Right ventricle myocardium inferior (tissue), 1 donor: ENCODE measurements at regions of chr7 and their contacts with region 1.

Region 1: DNA sequence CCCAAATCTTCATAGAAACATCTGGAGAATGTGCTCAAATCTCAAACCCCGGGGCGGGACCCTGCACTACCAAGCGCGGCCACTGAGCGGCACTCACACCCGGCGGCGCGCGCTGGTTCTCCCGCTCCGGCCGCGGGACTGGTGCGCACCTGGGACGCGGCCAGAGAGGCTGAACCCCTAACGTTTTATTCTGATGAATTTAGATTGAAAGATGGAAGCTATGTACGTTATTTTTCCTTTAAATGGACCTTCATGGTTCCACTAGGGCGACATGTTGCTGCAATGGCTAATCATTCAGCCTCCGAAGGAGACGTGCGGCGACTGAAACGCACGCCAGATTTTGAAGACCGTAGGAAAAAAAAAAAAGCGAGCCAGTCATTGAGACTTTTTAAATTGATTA is 107.0 kb upstream of the INSIG1 start:
- DNase-seq: peak; percentile 79
- ATAC-seq: peak; percentile 54

Region 2: GRCh38 chr7:154927624-154928143 is 263.0 kb before region 1 on chr7:
- intact Hi-C with region 1: loop called (anchors 5 kb)
- DNase-seq: no peak
- ATAC-seq: peak; percentile 86

Region 3: DNA sequence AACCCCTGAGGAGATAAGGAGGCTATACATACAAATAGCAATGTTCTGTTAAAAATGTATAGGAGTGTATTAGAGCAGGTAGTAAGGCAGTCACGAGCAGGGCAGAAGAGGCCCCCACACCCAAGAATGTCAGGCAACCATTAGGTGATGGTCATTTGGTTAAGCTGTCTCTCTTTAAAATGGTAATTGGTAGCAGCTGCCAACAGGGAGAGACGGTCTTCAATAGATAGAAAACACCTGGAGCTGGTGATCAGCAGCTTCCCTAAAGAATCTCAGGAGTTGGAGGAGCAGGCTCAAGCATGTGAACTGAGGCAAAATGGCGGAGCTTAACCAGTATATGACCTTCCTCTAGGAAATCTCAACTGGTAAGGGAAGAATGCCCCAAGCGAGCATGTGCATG is 146.9 kb before region 1 on chr7:
- intact Hi-C with region 1: no loop called
- DNase-seq: no peak
- ATAC-seq: no peak

Region 4: DNA sequence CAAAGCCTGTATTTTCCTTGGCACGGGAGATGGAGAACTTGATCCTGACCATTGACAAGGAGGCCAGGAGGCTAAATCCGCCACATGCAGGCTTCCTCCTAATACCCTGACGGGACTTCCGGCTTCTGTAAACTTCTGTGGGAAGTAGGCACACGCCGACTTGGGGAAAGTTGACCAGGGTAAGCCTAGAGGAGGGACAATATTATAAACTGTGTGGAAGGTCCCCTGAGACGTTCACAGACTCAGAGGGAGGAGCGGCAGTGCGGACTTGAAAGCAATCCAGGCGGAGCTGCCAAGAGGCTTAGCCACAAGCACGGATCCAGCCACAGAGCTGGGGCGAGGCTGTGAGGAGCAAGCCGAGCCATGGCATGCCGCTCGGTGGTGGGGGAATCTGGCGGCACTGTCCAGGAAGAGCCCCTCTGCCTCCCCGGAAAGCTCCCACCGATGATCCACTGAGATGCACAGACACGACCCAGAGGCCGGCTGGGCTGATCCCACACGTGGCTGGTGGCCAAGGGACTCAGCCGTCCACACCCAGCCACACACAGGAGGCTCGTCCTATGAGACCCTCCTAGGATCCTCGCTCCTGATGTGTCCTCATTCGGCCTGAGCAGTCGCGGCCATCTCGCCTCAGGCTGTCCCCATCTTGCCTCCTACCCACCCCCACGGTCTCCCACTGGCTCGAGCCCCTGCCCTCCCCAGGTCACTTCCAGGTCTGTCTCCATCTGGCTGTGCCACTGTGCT is 67.0 kb after region 1 on chr7:
- intact Hi-C with region 1: loop called (anchors 5 kb)
- DNase-seq: peak; percentile 87
- ATAC-seq: peak; percentile 90

Region 5: GRCh38 chr7:155298834-155299534 is 108.3 kb after region 1 on chr7:
- intact Hi-C with region 1: loop called (anchors 5 kb)
- DNase-seq: peak; percentile 98
- ATAC-seq: peak; percentile 84

Region 6: DNA sequence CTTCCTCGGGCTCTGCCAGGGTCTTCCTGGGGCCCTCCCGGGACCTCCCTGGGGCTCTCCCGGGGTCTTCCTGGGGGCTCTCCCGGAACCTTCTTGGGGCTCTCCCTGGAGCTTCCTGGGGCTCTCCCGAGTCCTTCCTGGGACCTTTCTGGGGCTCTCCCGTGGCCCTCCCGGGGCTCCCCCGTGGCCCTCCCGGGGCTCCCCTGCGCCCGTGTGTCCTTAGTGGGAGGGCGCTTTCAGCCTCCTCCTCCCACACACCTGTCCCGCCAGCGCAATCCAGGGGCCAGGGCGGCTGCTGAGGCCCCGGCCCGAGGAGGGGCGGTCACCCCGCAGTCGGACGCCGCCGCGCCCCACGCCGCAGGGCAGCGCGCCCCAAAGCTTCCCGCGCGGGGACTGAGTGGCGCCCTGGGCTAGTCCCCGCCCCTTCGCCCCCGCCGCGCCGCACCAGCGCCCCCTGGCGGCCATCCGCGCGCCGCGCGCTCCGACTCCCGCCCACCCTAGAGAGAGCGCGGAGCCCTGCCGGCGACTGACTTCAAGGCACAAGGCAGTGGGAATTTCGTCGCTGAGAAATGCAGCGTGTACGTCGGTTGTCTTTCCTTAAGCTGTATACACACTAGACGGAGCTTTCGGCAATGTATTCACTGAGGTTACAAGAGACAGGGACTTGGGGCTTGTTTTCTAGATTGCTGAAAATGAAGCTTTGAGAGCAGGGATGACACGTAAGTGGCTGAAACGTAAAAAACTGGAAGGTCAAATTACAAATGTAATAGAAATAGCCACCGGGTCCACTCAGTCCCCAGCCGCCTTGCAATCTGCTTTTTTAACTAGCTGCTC is 154.1 kb after region 1 on chr7:
- intact Hi-C with region 1: loop called (anchors 1 kb)
- DNase-seq: peak; percentile 93
- ATAC-seq: peak; percentile 94